Endothelial cell of umbilical vein (primary cell): ENCODE measurements at regions of chr4 and their contacts with region 1.

Region 1: GRCh38 chr4:76823495-76823894 is 74.4 kb downstream of the SOWAHB start:
- DNase-seq: no peak
- H3K4me3 ChIP-seq: no peak overlapping the region
- H3K27ac ChIP-seq: no peak overlapping the region
- H3K4me1 ChIP-seq: no peaks in the 10 kb centered on the region
- H3K27me3 ChIP-seq: no peaks in the 10 kb centered on the region
- CTCF ChIP-seq: no peak
- POLR2A ChIP-seq: no peak

Region 2: DNA sequence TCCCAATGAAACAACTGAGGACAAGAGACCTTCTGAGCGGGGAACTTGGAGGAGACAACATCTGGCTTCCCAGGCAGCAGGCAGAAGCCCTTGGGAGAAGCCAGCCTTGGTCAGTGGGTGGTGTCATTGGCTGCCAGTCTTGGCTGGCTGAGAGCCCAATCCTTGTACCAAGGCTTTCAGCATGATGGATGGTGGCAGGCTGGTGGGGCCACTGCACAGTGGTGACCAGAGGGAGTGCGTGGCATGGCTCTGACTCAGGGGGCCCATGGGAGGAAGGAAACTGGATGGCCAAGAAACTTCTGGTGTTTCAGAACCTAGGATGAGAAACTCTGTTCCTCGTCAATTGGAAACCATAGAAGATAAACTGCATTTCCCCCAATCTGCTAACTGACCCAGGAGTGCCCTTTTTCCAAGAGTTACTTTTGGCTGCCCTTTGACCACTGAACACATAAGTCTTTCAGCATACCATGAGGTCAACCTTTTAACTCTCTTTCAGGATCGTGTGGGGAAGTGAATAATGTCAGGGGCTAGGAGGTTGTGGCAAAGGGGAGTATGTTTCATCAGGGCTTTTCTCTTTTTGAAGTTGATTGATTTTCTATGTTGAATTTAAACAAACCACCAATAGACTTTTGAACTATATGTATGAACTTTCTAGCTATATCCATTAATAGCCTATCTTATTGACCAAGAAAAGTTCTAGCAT is 13.5 kb after region 1 on chr4:
- CTCF ChIA-PET with region 1: no interaction called
- POLR2A ChIA-PET with region 1: no interaction called
- dilution Hi-C with region 1: no loop called
- intact Hi-C with region 1: no loop called
- DNase-seq: no peak
- H3K4me3 ChIP-seq: no peak overlapping the region
- H3K27ac ChIP-seq: no peak overlapping the region
- H3K4me1 ChIP-seq: peaks cover 3% of the 10 kb centered on the region
- H3K27me3 ChIP-seq: no peaks in the 10 kb centered on the region
- CTCF ChIP-seq: no peak
- POLR2A ChIP-seq: no peak

Region 3: DNA sequence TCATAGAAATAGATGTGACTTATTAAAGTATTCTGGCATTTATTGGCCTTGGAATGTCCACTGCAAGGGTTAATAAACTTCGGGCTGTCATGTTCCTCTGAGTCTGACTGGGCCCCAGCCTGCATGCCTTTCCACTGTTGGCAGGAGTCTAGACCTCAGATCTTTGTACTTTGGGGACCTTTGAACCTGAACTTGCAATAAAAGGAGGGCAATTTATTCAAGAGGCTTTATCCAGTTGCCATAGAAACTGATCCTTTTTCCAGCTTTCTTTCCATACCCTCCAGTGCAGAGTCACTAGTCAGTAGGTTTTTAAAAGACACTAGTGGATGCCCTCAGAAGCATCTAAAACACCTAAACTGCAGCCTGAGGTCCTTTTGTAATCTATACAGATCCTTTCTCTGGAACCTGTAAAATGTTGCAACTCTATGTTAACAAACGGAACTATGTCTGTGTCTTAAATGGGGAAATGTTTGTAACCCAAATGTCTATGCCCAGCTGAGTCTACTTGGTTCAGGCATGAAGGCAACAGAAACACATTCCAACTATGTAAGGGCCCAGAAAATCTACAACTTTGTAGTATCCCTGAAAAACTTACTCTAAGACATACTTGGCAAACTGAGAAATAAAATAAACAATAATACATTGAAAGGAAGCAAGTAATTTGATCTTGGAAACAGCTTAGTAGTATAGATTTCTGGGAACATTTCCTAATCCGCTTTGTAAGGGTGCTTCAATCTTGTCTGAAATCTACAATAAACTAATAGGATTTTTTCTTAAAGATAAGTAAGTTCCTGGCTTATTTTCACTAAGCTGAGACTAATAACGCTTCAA is 33.0 kb after region 1 on chr4:
- CTCF ChIA-PET with region 1: no interaction called
- POLR2A ChIA-PET with region 1: interaction called, 11 read pairs
- dilution Hi-C with region 1: no loop called
- intact Hi-C with region 1: no loop called
- DNase-seq: peak; percentile 63
- H3K4me3 ChIP-seq: no peak overlapping the region
- H3K27ac ChIP-seq: no peak overlapping the region
- H3K4me1 ChIP-seq: no peaks in the 10 kb centered on the region
- H3K27me3 ChIP-seq: no peaks in the 10 kb centered on the region
- CTCF ChIP-seq: no peak
- POLR2A ChIP-seq: no peak